ENCODE measurements at regions of chr14 and their contacts with region 1.

Region 1: DNA sequence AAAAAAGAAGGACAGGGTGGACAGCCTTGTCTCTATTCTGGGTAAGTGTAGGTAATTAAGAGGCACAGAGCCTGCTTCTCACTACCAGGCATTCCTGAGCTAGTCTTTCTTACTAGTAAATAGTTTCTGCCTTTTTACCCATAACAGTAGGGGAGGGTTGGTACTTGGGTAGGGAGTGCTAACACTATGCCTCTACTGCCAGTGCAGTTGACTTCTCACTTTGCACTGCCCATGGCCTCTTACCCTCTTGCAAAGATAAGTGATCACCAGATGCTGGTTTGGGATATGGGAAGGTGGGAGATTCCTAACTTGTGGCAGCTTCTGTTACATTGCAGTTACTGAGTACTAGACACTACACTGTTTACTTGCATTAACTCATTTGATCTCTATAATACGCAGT is 11.6 kb downstream of the AHSA1 start:
- DNase-seq: no peak
- ATAC-seq: peak; percentile 10

Region 2: GRCh38 chr14:77554207-77554606 is 84.7 kb after region 1 on chr14:
- intact Hi-C with region 1: loop called in 1 of 2 experiments (anchors 5 kb)
- DNase-seq: no peak
- ATAC-seq: no peak